ENCODE measurements at regions of chr7 and their contacts with region 1.

Region 1: DNA sequence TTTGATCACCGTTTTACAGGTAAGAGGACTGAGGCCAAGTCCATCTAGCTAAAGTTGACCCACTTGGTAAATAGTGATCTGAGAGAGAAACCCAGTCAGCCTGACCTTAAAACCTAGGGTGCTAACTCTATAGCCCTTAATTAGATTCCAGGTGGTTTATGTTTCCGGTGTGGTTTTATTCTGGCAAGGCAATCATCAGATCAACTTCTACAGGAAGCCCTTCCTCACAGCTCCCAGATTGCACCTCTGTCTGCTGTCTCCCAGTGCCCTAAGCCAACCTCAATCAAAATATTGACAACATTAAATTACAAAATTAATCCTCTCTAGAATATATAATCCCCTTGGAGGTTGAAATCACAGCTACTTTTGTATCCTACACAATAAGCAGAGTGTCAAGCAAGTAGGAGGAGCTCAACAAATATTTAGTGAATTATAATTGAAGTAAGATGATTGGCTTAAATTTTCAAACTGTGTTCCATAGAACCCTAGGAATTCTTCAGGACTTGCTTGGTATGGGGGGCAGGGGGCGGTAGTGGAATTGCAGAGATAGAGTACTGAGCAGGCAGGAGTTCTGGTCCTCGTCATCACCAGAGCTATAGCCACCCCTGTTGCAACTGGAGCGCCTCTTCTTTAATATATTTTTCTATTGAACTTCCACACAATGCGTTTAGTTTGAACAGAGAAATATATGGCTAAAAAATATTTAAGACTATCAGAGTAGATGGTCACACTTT is 692.8 kb upstream of the LRRN3 start:
- DNase-seq: no peak
- ATAC-seq: no peak
- H3K4me3 ChIP-seq: no peak overlapping the region
- H3K27ac ChIP-seq: no peak overlapping the region
- H3K4me1 ChIP-seq: no peaks in the 10 kb centered on the region
- H3K27me3 ChIP-seq: no peaks in the 10 kb centered on the region
- CTCF ChIP-seq: no peak
- POLR2A ChIP-seq: no peak

Region 2: DNA sequence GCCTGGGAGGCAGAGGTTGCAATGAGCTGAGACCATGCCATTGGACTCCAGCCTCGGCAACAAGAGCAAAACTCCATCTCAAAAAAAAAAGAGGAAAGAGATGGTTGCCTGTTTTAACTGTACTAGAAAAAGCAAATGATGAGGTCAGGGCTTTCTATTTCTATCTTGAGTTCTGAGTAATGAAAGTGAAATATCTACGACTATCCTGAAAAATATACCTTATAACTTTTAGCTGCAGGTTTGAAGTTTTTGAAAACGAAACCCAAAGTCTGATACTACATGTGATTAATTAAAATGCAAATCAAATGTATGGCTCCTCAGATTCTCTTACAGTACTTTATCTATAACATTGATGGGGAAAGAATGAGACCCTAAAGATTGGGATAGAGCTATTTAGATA is 56.6 kb after region 1 on chr7:
- intact Hi-C with region 1: loop called in 1 of 10 experiments (anchors 10 kb)
- DNase-seq: no peak
- ATAC-seq: no peak
- H3K4me3 ChIP-seq: no peak overlapping the region
- H3K27ac ChIP-seq: no peak overlapping the region
- H3K4me1 ChIP-seq: no peaks in the 10 kb centered on the region
- H3K27me3 ChIP-seq: no peaks in the 10 kb centered on the region
- CTCF ChIP-seq: no peak
- POLR2A ChIP-seq: no peak

Measured in heart left ventricle (tissue), 16 donors.